ENCODE measurements at regions of chr3 and their contacts with region 1.

Region 1: DNA sequence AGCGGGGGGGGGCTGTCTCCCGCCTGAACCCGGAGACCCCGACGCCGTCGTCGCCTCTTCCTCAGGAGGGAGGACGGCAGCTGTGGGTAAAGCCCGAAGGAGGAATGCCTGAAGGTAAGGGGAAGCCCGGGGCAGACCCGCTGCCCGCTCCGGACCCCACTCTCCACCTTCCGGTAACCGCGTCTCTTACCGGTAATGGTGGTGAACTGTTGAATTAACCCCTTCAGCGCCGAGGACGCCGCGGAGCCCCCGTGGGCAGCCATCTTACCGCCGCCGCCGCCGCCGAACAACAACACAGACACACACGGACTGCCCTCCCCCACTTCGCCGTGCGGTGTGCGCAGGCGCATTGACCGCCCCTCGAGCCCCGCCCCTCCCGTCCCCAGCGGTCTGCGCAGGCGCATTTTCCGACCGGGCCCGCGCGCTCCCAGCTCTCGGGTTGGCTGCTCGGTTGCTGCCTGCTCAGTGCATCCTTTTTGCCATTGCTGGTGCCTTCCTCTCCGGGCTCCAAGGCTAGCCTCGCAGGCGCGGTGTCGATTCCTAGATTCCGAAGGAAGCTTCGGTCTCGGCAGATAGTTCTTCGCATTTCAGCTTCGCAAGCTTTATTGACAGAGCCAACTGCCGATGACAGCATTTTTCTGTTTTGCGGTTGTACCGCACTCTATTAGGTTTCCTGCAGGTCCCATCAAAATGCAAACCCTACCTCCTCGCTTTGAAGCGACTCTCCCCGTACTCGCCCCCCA is at the start of gene UBXN7:
- DNase-seq: peak; percentile 94
- H3K4me3 Mint-ChIP-seq: peak within 1 kb of the TSS; percentile 89
- H3K27ac Mint-ChIP-seq: peak within 1 kb of the TSS; percentile 94
- H3K4me1 Mint-ChIP-seq: peaks cover 6% of the 10 kb centered on the region
- H3K27me3 Mint-ChIP-seq: no peaks in the 10 kb centered on the region
- CTCF ChIP-seq: no peak
- total RNA-seq, gene UBXN7: 64.7 and 71.6 TPM in 2 replicates

Region 2: DNA sequence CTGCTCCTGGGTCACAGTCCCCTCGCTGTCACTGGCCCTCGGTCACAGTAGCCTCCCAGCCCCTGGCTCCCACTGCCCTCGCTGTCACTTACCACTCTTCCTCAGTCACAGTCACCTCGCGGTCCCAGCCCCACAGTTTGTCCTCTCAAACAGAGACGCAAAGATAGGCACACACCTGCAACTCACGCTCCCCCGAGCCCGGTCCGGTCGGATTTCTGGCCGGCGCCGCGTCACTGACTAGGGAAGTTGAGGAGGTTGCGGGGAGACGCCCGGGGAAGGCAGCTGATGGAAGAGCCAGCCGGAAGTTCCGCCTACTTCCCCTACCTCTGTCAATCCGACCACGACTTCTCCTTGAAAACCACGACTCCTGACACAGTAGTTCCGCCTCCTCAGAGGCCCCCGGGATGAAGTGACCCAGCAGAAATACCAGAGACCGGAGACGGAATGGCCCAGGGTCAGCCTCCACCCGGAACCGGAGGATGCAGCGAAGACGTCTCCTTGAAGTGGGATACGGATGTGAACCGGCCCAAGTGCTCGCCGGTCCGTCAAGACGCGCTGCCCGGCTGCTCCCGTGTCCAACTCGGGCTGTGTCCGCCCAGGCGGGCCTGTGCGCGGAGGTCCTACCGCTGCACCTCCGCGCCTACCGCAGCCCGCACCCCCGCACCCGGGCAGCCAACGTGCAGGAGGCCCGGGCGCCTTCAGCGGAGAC is 144.7 kb before region 1 on chr3 and contains the start of gene PCYT1A:
- CTCF ChIA-PET with region 1: no interaction called
- POLR2A ChIA-PET with region 1: interaction called, 13 read pairs
- intact Hi-C with region 1: no loop called
- DNase-seq: peak; percentile 96
- H3K4me3 Mint-ChIP-seq: peak within 1 kb of the TSS; percentile 100
- H3K27ac Mint-ChIP-seq: peak within 1 kb of the TSS; percentile 99
- H3K4me1 Mint-ChIP-seq: peaks cover 26% of the 10 kb centered on the region
- H3K27me3 Mint-ChIP-seq: no peaks in the 10 kb centered on the region
- CTCF ChIP-seq: no peak
- total RNA-seq, gene PCYT1A: 64.5 and 78.1 TPM in 2 replicates

Region 3: DNA sequence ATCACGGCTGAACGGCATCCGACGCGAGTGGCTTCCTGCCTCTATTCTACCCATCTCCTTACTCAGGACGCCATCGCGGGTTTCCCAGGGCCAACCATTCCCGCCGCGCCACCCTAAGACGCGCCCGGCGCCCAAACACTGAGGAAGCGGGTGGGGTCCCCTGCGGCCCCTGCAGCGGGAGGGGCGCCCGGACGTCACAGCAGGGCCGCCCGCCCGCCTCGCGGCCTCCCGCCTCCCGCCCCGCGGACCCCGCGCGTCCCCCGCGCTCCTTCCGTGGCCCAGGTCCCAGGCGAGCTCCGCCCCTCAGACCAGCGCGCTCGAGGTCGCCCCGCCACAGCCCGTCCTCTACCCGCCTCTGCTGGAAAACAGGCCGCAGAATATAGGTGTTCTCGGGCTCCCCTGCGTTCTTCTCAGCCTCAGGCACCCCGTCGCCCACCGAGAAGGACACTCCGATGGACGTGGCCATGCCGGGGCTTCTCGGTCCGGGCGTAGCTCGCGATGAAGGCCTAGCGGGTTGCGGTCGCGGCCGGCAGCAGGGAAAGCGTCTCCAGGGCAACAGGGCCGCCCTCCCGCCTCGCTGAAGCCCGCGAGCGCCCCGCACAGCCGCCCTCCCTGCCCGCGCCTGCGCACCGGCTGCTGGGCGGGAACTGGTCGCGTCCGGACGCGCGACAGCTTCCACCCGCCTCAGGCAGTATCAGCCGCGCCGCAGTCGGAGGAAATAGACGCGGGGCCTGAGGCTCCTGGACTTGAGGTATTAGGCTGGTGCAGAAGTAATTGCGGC is 114.4 kb before region 1 on chr3 and contains the start of gene DYNLT2B:
- CTCF ChIA-PET with region 1: no interaction called
- POLR2A ChIA-PET with region 1: interaction called, 17 read pairs
- intact Hi-C with region 1: loop called (anchors 1 kb)
- DNase-seq: peak; percentile 87
- H3K4me3 Mint-ChIP-seq: peak within 1 kb of the TSS; percentile 94
- H3K27ac Mint-ChIP-seq: peak within 1 kb of the TSS; percentile 95
- H3K4me1 Mint-ChIP-seq: no peaks in the 10 kb centered on the region
- H3K27me3 Mint-ChIP-seq: no peaks in the 10 kb centered on the region
- CTCF ChIP-seq: no peak
- total RNA-seq, gene DYNLT2B: 22.3 and 23.5 TPM in 2 replicates

Region 4: GRCh38 chr3:196339493-196340254 is 92.6 kb before region 1 on chr3:
- CTCF ChIA-PET with region 1: no interaction called
- POLR2A ChIA-PET with region 1: interaction called, 4 read pairs
- intact Hi-C with region 1: loop called (anchors 2 kb)
- DNase-seq: peak; percentile 86
- H3K4me3 Mint-ChIP-seq: no peak overlapping the region
- H3K27ac Mint-ChIP-seq: peak overlapping the region; percentile 57
- H3K4me1 Mint-ChIP-seq: peaks cover 24% of the 10 kb centered on the region
- H3K27me3 Mint-ChIP-seq: no peaks in the 10 kb centered on the region
- CTCF ChIP-seq: no peak

Region 5: DNA sequence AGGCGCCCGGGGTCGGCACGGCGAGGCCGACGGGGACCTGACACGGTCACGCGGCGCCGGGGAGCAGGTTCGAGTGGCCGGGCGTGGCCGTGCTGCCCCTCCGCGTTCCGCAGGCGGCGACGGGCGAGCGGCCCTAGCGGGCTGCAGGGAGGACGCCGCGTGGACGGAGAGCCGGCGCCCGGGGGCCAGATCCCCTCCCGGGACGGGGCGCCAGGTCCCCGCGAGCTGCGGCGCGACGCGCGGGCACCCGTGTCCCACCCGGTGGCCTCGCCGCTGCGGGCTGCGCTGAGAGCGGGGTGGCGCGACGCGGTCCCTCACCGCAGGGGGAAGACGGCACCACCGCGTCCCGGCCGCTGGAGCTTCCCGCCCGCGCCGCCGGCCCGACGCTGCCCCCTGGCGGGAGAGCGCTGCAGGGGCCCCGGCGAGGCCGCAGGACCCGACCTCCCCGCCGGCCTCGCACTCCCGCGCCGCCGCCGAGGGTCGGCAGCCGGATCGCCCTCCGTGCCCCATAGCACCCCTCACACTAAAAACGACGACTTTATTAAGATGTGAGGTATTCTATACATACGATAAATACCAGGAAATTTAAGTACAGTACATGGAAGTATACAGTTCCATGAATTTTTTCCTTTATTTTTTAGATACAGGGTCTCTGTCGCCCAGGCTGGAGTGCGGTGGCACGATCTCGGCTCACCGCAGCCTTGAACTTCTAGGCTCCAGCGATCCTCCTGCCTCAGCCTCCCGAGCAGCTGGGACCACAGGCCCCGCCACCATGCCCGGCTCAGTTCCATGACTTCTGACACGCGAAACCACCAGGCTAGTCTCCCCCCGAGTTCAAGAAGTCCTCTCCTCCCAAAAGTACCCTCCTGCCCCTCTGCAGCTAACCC is 537.6 kb after region 1 on chr3:
- CTCF ChIA-PET with region 1: no interaction called
- POLR2A ChIA-PET with region 1: no interaction called
- intact Hi-C with region 1: no loop called
- DNase-seq: peak; percentile 54
- H3K4me3 Mint-ChIP-seq: peak overlapping the region; percentile 68
- H3K27ac Mint-ChIP-seq: no peak overlapping the region
- H3K4me1 Mint-ChIP-seq: no peaks in the 10 kb centered on the region
- H3K27me3 Mint-ChIP-seq: no peaks in the 10 kb centered on the region
- CTCF ChIP-seq: peak; percentile 74

Measured in MCF 10A (cell line).